ENCODE measurements at regions of chr5 and their contacts with region 1.

Region 1: DNA sequence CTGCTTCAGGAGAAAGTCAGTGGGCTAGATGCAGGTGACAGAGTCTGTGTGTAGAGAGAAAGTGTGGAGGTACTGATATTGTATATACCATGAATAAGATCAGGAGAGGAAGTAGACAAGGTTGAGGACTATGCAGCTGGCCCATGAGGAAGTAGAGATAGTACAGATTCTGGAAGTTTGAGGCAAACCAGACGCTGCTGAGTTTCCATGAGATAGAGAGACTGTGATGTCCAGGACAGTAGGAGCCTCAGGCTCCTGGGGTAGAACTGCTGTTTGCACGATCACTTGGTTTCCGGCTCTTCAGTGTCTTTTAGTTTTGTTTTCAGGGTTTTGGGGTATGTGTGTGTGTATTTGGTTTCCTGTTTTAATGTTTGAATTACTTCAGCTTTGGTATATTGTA is 13.6 kb downstream of the OTULINL start:
- DNase-seq: peak; percentile 66
- H3K4me3 Mint-ChIP-seq: peak overlapping the region; percentile 68
- H3K27ac Mint-ChIP-seq: peak overlapping the region; percentile 93
- H3K4me1 Mint-ChIP-seq: peaks cover 83% of the 10 kb centered on the region
- H3K27me3 Mint-ChIP-seq: no peaks in the 10 kb centered on the region

Region 2: DNA sequence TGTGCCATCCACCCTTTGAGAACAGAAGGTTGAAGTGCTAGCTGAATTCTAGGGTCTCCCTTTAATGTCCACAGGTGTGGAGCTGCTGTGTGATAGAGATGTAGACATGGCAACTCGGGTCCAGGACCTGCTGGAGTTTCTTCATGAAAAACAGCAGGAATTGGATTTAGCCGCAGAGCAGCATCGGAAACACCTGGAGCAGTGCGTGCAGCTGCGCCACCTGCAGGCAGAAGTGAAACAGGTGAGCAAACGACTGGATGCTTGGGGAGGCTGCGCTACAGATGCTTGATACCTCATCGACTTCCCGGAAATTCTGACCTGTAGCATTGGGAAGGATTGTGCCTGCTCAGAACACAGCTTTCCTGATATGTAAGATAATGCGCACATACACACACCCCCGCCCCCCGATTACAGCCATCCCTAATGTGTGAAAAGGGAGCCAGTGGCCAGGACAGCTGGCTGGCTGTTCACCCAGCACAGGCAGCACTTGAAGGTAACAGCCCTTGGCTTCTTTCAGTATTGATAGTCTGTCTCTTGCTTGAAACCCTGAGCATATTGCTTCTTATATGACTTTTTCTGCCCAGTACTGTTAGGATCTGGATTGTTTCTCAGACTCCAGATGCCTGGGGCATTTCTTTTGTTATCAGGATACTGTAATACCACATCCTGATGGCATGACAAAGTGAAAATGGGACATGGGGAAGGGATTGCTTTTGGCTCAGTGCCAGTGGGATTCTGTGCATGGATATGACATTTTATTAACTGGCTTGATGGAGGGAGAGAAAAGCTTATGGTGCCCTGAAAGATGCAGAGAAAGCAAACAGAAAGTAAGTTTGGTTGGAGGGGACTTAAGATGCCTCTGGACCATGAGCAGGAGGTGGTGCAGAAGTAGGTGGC is 230.4 kb before region 1 on chr5:
- intact Hi-C with region 1: loop called (anchors 5 kb)
- DNase-seq: no peak
- H3K4me3 Mint-ChIP-seq: no peak overlapping the region
- H3K27ac Mint-ChIP-seq: no peak overlapping the region
- H3K4me1 Mint-ChIP-seq: peaks cover 48% of the 10 kb centered on the region
- H3K27me3 Mint-ChIP-seq: peaks cover 2% of the 10 kb centered on the region

Region 3: GRCh38 chr5:14479143-14479696 is 116.0 kb before region 1 on chr5:
- intact Hi-C with region 1: loop called (anchors 1 kb)
- DNase-seq: no peak
- H3K4me3 Mint-ChIP-seq: no peak overlapping the region
- H3K27ac Mint-ChIP-seq: peak overlapping the region; percentile 79
- H3K4me1 Mint-ChIP-seq: peaks cover 18% of the 10 kb centered on the region
- H3K27me3 Mint-ChIP-seq: no peaks in the 10 kb centered on the region

Region 4: DNA sequence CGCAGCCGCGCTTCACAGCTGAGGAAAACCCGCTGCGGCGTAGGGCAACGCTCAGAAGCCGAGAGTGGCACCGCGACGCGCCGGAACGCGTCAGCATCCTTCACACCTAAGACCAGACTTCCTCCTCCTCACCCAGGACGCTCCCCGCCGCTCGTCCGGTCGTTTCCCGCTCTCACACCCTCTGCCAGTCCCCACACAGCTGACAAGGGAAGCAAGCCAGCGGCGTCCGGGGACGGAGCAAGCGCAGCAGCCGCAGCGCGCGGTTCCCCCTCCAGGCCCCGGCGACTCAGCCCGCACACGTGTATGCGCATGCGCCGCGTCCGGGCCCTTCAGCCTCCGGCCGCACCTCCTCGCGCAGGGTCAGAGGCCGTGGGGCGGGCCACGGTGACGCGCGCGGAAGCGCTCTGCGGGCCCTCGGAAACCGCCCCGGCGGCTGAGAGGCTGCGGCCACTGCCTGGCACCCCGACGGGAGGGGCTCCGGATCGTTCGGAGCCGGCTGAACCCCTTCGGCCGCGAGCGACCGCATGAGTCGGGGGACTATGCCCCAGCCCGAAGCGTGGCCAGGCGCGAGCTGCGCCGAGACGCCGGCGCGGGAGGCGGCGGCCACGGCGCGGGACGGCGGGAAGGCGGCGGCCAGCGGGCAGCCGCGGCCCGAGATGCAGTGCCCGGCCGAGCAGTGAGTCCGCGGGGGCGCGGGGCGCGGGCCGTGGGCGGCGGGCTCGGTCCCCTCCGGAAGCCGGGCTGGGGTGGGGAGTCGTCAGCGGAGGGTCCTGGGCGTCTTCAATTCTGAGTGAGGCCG is 69.3 kb after region 1 on chr5 and contains the start of gene OTULIN:
- intact Hi-C with region 1: loop called (anchors 1 kb)
- DNase-seq: peak; percentile 85
- H3K4me3 Mint-ChIP-seq: peak within 1 kb of the TSS; percentile 96
- H3K27ac Mint-ChIP-seq: peak within 1 kb of the TSS; percentile 98
- H3K4me1 Mint-ChIP-seq: peaks cover 54% of the 10 kb centered on the region
- H3K27me3 Mint-ChIP-seq: no peaks in the 10 kb centered on the region
- total RNA-seq, gene OTULIN: 59.4 and 62.1 TPM in 2 replicates

Region 5: DNA sequence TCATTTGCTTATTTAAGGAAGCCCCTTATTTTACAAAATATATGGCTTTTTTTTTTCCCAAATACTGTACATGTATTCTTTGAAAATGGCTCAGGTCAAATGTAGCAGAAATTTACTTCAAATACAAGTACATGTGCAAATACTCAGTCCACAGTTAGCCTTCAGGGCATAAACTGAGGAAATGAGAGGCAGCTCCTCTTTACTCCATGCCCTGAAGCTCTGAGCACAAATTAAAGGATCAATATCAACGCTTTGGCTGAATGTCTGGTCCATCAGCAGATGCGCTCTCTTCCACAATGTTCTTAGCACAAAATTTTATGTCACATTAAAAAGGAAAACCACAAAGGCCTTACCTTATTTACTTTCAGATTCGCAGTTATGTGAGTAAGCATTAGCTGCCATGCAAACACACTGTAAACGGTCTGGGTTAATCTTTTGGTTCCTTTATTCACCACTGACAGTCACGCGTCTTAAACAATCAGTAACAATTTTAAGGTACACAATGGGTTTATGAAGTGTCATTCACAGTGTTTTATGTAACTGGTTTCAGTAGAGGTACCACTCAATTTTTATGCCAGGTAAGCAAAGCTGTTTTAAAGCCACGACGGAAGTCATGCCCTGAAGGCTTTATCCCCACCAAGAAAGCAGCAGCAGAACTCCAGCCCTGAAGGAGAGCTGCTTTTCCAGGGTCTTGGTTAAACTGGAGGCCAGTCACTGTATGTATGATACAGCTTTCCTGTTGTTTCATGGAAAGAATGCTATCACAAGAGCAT is 172.7 kb after region 1 on chr5:
- intact Hi-C with region 1: no loop called
- DNase-seq: no peak
- H3K4me3 Mint-ChIP-seq: no peak overlapping the region
- H3K27ac Mint-ChIP-seq: no peak overlapping the region
- H3K4me1 Mint-ChIP-seq: peaks cover 11% of the 10 kb centered on the region
- H3K27me3 Mint-ChIP-seq: no peaks in the 10 kb centered on the region

Region 6: GRCh38 chr5:14809369-14810155 is 214.4 kb after region 1 on chr5:
- intact Hi-C with region 1: loop called (anchors 5 kb)
- DNase-seq: peak; percentile 77
- H3K4me3 Mint-ChIP-seq: peak overlapping the region; percentile 76
- H3K27ac Mint-ChIP-seq: peak overlapping the region; percentile 94
- H3K4me1 Mint-ChIP-seq: peaks cover 44% of the 10 kb centered on the region
- H3K27me3 Mint-ChIP-seq: no peaks in the 10 kb centered on the region